ENCODE measurements at regions of chr1 and their contacts with region 1.

Region 1: DNA sequence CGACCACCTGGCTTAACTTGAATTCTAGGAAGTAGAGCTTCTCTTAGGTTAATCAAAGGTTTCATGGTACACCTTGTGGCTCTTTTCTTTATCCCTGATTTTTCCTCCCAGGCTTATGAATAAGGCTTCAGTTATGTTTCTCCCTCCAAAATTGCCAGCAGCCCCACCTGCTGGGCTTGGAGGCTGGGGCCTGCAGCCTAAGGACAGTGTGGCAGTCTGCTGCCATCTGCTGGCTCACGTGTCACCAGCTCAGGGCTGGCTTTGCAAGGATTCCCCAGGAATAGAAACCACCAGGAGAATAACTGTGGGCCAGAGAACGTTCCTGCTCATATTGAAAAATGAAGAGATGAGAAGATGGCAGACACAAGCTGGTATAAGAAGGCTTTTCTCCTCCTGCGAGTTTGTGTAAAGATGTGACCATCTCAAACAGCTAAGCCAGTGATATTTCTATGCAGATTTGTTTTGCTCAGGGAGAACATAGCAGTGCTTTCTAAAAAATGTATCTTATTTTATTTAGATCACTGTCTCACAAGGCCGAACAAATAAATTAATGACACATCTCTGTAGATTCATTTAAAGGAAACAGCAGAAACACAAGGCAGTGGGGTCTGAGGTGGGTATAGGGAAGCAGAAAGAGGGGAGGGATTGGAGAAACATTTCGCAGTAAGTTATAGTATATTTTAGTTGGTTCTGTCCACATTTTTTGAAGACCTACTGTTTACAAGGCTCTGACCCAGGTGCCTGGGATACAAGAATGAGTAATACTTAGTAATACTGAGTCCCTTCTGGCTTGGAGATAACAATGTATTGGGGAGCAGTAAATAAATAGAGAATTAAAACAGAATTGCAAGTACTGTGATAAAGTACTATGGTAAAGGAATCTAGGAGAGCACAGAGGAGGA is 291.1 kb upstream of the SGIP1 start:
- DNase-seq: peak; percentile 41 to 91
- ATAC-seq: peak; percentile 95 to 96
- H3K4me3 ChIP-seq: no peak overlapping the region
- H3K27ac ChIP-seq: peak overlapping the region; percentile 77 to 90
- H3K4me1 ChIP-seq: peaks cover 76% of the 10 kb centered on the region
- CTCF ChIP-seq: peak; percentile 99
- EP300 ChIP-seq: no peak
- POLR2A ChIP-seq: no peak
- RAD21 ChIP-seq: peak; percentile 99 to 100

Region 2: GRCh38 chr1:65952696-65953095 is 290.2 kb before region 1 on chr1:
- CTCF ChIA-PET with region 1: interaction called, 45 read pairs
- POLR2A ChIA-PET with region 1: no interaction called
- DNase-seq: no peak
- ATAC-seq: no peak
- H3K4me3 ChIP-seq: no peak overlapping the region
- H3K27ac ChIP-seq: peak overlapping the region in 1 of 2 experiments; percentile 36; a peak in 1 of 6 replicates
- H3K4me1 ChIP-seq: peaks cover 4% of the 10 kb centered on the region; the same call in 1 of the 3 replicates
- CTCF ChIP-seq: no peak
- EP300 ChIP-seq: no peak
- POLR2A ChIP-seq: no peak
- RAD21 ChIP-seq: no peak

Region 3: DNA sequence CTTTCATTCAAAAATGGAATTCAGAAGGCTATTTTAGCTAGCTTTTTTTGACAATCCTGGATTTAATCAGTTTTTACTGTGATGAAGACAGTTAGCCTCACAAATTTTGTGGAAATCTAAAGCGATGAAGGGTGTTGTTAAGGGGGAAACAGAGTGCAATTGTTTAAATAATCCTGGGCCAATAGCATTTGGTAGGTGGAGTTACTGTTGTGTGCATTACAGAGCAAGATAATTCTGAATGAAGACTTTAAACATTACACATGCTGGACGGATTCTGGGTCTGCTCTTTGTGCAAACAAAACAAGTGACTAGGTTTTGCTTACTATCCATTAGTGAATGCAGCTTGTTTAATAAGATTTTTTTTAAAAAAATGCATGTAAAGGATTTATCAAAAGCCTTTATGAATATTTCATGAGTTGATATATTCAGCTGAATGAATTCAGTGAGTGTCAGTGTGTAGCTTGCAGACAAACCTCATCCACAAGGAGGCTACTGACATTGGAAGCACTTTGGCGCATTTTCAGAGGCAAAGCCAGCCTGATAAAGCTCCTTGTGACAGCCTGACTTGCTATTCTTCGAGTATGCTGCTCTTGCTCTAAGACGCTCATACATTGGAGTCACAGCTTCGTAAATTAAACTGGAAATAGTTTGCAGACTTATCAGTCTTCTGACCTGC is 250.6 kb before region 1 on chr1:
- CTCF ChIA-PET with region 1: interaction called, 48 read pairs
- POLR2A ChIA-PET with region 1: interaction called, 6 read pairs
- DNase-seq: peak; percentile 3 to 84
- ATAC-seq: peak; percentile 95 to 98
- H3K4me3 ChIP-seq: peak overlapping the region; percentile 72
- H3K27ac ChIP-seq: peak overlapping the region; percentile 78 to 89
- H3K4me1 ChIP-seq: peaks cover 39% of the 10 kb centered on the region
- CTCF ChIP-seq: peak; percentile 8; the same call in 1 of the 3 replicates
- EP300 ChIP-seq: no peak
- POLR2A ChIP-seq: no peak
- RAD21 ChIP-seq: peak in 1 of 2 experiments; percentile 38; a peak in 2 of 5 replicates

Region 4: GRCh38 chr1:66182551-66183178 is 60.2 kb before region 1 on chr1:
- CTCF ChIA-PET with region 1: interaction called, 28 read pairs
- POLR2A ChIA-PET with region 1: interaction called, 8 read pairs
- DNase-seq: peak; percentile 54 to 94
- ATAC-seq: peak; percentile 98 to 99
- H3K4me3 ChIP-seq: peak overlapping the region; percentile 1; the same call in 1 of the 3 replicates
- H3K27ac ChIP-seq: peak overlapping the region; percentile 91 to 97
- H3K4me1 ChIP-seq: peaks cover 56% of the 10 kb centered on the region
- CTCF ChIP-seq: no peak
- EP300 ChIP-seq: peak; percentile 98 to 99
- POLR2A ChIP-seq: no peak
- RAD21 ChIP-seq: peak; percentile 28 to 75; a peak in 4 of 5 replicates

Region 5: GRCh38 chr1:66223681-66224080 is 19.2 kb before region 1 on chr1:
- CTCF ChIA-PET with region 1: interaction called, 21 read pairs
- POLR2A ChIA-PET with region 1: no interaction called
- DNase-seq: no peak
- ATAC-seq: no peak
- H3K4me3 ChIP-seq: no peak overlapping the region
- H3K27ac ChIP-seq: peak overlapping the region in 1 of 2 experiments; percentile 32; a peak in 2 of 6 replicates
- H3K4me1 ChIP-seq: peaks cover 54% of the 10 kb centered on the region
- CTCF ChIP-seq: no peak
- EP300 ChIP-seq: no peak
- POLR2A ChIP-seq: no peak
- RAD21 ChIP-seq: no peak

Region 6: GRCh38 chr1:66253330-66253921 is 10.5 kb after region 1 on chr1:
- CTCF ChIA-PET with region 1: interaction called, 38 read pairs
- POLR2A ChIA-PET with region 1: no interaction called
- DNase-seq: peak; percentile 55 to 75
- ATAC-seq: peak; percentile 89 to 91
- H3K4me3 ChIP-seq: no peak overlapping the region
- H3K27ac ChIP-seq: peak overlapping the region; percentile 81 to 87
- H3K4me1 ChIP-seq: peaks cover 53% of the 10 kb centered on the region
- CTCF ChIP-seq: peak; percentile 84
- EP300 ChIP-seq: no peak
- POLR2A ChIP-seq: no peak
- RAD21 ChIP-seq: peak; percentile 95

Region 7: GRCh38 chr1:66446261-66447001 is 203.5 kb after region 1 on chr1:
- CTCF ChIA-PET with region 1: interaction called, 175 read pairs
- POLR2A ChIA-PET with region 1: interaction called, 5 read pairs
- DNase-seq: peak; percentile 25 to 68
- ATAC-seq: peak; percentile 68 to 87
- H3K4me3 ChIP-seq: no peak overlapping the region
- H3K27ac ChIP-seq: peak overlapping the region; percentile 67 to 83
- H3K4me1 ChIP-seq: peaks cover 27% of the 10 kb centered on the region
- CTCF ChIP-seq: peak; percentile 80
- EP300 ChIP-seq: no peak
- POLR2A ChIP-seq: no peak
- RAD21 ChIP-seq: peak; percentile 89 to 93

Measured in A549 (cell line).